Panc1 (cell line): ENCODE measurements at regions of chr4 and their contacts with region 1.

Region 1: DNA sequence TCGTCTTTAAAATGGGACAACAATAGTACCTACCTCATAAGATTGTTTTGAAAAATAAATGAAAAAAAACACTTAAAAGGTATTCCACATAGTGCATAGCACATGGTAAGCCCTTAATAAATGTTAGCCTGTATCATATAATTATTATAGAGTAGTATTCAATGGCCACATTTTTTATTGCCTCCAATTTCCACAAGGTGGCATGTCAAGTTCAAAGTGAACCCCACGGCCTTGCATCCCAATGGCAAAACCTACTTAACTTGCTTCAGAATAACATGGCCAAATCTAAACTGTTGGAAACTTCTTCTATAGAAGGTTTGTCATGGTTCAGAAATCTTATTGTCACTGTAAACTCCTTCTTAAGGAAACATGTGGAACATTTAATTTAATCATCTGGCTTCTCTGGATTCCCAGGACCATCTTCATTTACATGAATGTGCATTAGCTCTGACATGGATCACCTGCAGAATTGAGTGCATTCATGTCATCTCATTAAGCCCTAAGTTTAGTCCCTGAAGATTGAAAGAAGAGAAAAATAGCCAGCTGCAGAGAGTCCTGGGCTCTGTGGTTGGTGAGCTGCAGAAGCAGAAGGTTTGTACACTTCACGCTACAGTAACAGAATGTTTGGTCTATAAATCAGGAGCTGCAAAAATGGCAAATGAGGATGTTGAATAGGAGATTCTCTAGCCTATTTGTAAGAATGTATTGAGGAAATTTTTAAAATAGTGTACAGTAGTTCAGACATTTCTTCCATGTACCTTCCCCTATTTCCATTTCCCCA is 61.0 kb downstream of the ANXA3 start:
- DNase-seq: no peak
- ATAC-seq: peak; percentile 72
- H3K4me3 ChIP-seq: no peak overlapping the region
- H3K27ac ChIP-seq: no peak overlapping the region
- H3K4me1 ChIP-seq: no peaks in the 10 kb centered on the region
- H3K27me3 ChIP-seq: no peaks in the 10 kb centered on the region
- CTCF ChIP-seq: peak; percentile 42; the same call in 1 of the 2 replicates

Region 2: GRCh38 chr4:78542373-78542772 is 70.2 kb before region 1 on chr4:
- CTCF ChIA-PET with region 1: no interaction called
- POLR2A ChIA-PET with region 1: no interaction called
- in situ Hi-C with region 1: no loop called
- intact Hi-C with region 1: no loop called
- DNase-seq: no peak
- ATAC-seq: no peak
- H3K4me3 ChIP-seq: no peak overlapping the region
- H3K27ac ChIP-seq: no peak overlapping the region
- H3K4me1 ChIP-seq: no peaks in the 10 kb centered on the region
- H3K27me3 ChIP-seq: no peaks in the 10 kb centered on the region
- CTCF ChIP-seq: no peak

Region 3: DNA sequence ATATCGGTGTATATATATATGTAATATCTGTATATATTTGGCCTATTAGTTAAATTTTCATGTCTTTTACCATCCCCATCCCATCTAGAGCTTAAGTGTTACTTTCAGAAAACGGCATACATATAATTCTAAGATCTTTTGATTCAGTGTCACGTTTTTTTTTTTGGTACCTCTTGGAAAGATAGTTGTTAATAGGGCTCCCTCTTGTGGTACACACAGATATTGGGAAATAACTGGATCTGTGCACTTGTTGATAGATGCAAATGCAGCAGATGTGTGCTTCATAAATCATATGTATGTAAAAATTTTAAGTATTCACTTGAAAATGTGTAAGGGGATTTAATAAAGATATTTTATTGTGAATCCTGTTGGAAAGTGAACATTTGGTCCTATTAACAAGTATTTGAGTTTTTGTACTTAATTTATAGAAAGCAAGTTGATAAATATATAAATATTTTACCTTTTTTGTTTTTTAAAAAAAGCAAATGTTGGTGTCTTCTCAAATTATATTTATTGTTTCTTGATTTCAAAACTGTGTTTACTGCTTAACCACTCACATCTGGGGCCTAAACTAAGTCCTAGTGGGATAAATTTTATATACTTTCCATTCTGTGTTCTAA is 251.9 kb after region 1 on chr4:
- CTCF ChIA-PET with region 1: no interaction called
- POLR2A ChIA-PET with region 1: no interaction called
- in situ Hi-C with region 1: no loop called
- intact Hi-C with region 1: loop called (anchors 1 kb)
- DNase-seq: peak; percentile 41
- ATAC-seq: no peak; the same call in 1 of the 2 replicates
- H3K4me3 ChIP-seq: no peak overlapping the region
- H3K27ac ChIP-seq: no peak overlapping the region
- H3K4me1 ChIP-seq: no peaks in the 10 kb centered on the region
- H3K27me3 ChIP-seq: no peaks in the 10 kb centered on the region
- CTCF ChIP-seq: peak; percentile 61; the same call in 1 of the 2 replicates